Heart right ventricle (tissue), 16 donors: ENCODE measurements at regions of chr9 and their contacts with region 1.

Region 1: GRCh38 chr9:93592643-93593021 is 16.2 kb downstream of the PHF2 start:
- DNase-seq: no peak
- ATAC-seq: no peak
- H3K4me3 ChIP-seq: no peak overlapping the region
- H3K27ac ChIP-seq: no peak overlapping the region
- H3K4me1 ChIP-seq: peaks cover 19 to 74% (median 56%) of the 10 kb centered on the region in 9 donors
- H3K27me3 ChIP-seq: no peaks in the 10 kb centered on the region
- CTCF ChIP-seq: no peak

Region 2: DNA sequence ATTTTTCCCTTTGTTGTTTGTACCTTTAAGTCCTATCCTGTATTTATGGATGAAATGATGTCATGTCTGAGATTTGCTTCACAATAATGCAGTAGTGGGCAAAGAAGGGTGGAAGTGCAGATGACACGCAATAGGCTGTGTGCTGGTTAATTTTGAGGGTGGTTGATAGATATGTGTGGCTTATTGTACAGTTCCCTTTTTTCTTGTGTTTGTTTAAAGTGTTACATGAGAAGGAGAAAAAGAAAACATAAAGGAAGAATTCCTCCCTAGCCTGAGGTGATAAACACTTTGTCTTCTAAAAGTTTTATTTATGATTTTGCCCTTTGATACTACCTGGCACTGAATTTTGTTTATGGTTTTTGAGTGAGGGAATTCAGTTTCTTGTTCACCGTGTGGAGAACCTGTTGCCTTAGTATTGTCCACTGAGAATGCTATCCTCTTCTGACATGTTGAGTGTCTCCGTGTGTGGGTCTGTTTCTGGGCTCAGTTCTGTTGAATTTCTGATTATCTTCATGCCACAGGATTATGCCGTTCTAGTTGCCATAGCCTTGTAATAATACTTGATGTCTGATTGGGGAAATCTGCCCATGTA is 87.0 kb before region 1 on chr9:
- intact Hi-C with region 1: no loop called
- DNase-seq: no peak
- ATAC-seq: no peak
- H3K4me3 ChIP-seq: peak overlapping the region in 1 of 10 donors; percentile 33
- H3K27ac ChIP-seq: peak overlapping the region in 4 of 10 donors; percentile 32 to 89 (median 52)
- H3K4me1 ChIP-seq: peaks cover 0 to 80% (median 14%) of the 10 kb centered on the region in 9 donors
- H3K27me3 ChIP-seq: no peaks in the 10 kb centered on the region
- CTCF ChIP-seq: no peak

Region 3: GRCh38 chr9:93619272-93619775 is 26.7 kb after region 1 on chr9:
- intact Hi-C with region 1: loop called in 1 of 10 experiments (anchors 1 kb)
- DNase-seq: no peak
- ATAC-seq: no peak
- H3K4me3 ChIP-seq: no peak overlapping the region
- H3K27ac ChIP-seq: no peak overlapping the region
- H3K4me1 ChIP-seq: peaks cover 3 to 64% (median 31%) of the 10 kb centered on the region in 9 donors
- H3K27me3 ChIP-seq: no peaks in the 10 kb centered on the region
- CTCF ChIP-seq: no peak

Region 4: GRCh38 chr9:93650448-93650847 is 57.8 kb after region 1 on chr9:
- intact Hi-C with region 1: loop called in 1 of 10 experiments (anchors 10 kb)
- DNase-seq: no peak
- ATAC-seq: no peak
- H3K4me3 ChIP-seq: no peak overlapping the region
- H3K27ac ChIP-seq: no peak overlapping the region
- H3K4me1 ChIP-seq: peaks cover 0 to 4% (median 0%) of the 10 kb centered on the region in 9 donors
- H3K27me3 ChIP-seq: no peaks in the 10 kb centered on the region
- CTCF ChIP-seq: no peak

Region 5: DNA sequence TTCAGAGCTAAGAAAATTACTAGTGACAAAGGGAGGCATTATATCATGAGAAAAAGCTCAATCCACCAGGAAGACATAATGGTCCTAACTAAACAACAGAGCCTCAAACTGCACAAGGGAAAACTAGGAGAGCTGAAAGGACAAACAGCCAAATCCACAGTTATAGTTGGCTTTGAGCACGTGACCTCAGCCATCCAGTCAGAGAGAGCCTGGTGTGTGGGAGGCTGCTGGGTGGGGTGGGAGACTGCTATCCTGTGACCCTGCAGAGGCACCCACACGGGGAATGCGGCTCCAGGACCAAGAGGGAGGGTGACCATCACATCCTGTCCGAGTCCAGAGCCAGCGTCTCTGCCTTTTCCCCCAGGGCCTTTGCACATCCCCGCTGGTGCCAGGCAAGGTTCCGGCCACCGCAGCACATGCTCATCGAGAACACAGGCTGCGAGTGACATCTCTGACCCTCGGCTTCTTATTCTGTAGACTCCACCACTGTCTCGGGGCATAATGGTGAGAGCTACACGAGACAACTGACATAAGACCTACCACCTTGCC is 128.9 kb after region 1 on chr9:
- intact Hi-C with region 1: no loop called
- DNase-seq: no peak
- ATAC-seq: no peak
- H3K4me3 ChIP-seq: no peak overlapping the region
- H3K27ac ChIP-seq: no peak overlapping the region
- H3K4me1 ChIP-seq: no peaks in the 10 kb centered on the region
- H3K27me3 ChIP-seq: peaks cover 0 to 20% (median 0%) of the 10 kb centered on the region in 7 donors
- CTCF ChIP-seq: no peak